ENCODE measurements at regions of chr5 and their contacts with region 1.

Region 1: GRCh38 chr5:112154940-112155686 is 264.0 kb downstream of the EPB41L4A start:
- DNase-seq: no peak
- ATAC-seq: peak; percentile 84
- H3K4me3 Mint-ChIP-seq: no peak overlapping the region
- H3K27ac Mint-ChIP-seq: peak overlapping the region; percentile 40
- H3K4me1 Mint-ChIP-seq: peaks cover 26% of the 10 kb centered on the region
- H3K27me3 Mint-ChIP-seq: no peaks in the 10 kb centered on the region

Region 2: DNA sequence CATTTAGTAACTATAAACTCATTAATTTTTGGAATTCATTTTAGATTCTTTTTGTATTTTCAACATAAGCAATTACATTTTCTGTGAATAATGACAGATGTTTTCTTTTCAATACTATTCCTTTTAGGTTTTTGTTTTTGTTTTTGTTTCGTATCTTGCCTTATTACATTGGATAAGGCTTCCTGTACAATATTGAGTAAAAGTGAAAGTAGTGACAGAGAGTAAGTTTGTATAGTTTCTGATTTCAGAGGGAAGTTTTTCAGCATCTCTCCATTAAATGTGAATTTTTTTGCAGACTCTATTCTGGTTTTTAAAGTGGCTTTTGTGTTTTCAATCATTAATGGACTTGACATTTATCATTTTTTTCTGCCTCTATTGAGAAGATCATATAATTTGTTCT is 943.8 kb before region 1 on chr5:
- CTCF ChIA-PET with region 1: no interaction called
- POLR2A ChIA-PET with region 1: no interaction called
- intact Hi-C with region 1: loop called in 1 of 2 experiments (anchors 10 kb)
- DNase-seq: no peak
- ATAC-seq: peak; percentile 81
- H3K4me3 Mint-ChIP-seq: no peak overlapping the region
- H3K27ac Mint-ChIP-seq: peak overlapping the region; percentile 14
- H3K4me1 Mint-ChIP-seq: peaks cover 36% of the 10 kb centered on the region
- H3K27me3 Mint-ChIP-seq: peaks cover 3% of the 10 kb centered on the region

Region 3: GRCh38 chr5:111229871-111230810 is 925.0 kb before region 1 on chr5:
- CTCF ChIA-PET with region 1: no interaction called
- POLR2A ChIA-PET with region 1: no interaction called
- intact Hi-C with region 1: loop called (anchors 10 kb)
- DNase-seq: peak; percentile 36
- ATAC-seq: peak; percentile 49
- H3K4me3 Mint-ChIP-seq: peak overlapping the region; percentile 69
- H3K27ac Mint-ChIP-seq: peak overlapping the region; percentile 96
- H3K4me1 Mint-ChIP-seq: peaks cover 71% of the 10 kb centered on the region
- H3K27me3 Mint-ChIP-seq: no peaks in the 10 kb centered on the region

Region 4: GRCh38 chr5:111757355-111758283 is 397.5 kb before region 1 on chr5:
- CTCF ChIA-PET with region 1: interaction called, 5 read pairs
- POLR2A ChIA-PET with region 1: no interaction called
- intact Hi-C with region 1: loop called (anchors 2 to 5 kb)
- DNase-seq: peak; percentile 91
- ATAC-seq: peak; percentile 78
- H3K4me3 Mint-ChIP-seq: peak overlapping the region; percentile 80
- H3K27ac Mint-ChIP-seq: peak overlapping the region; percentile 86
- H3K4me1 Mint-ChIP-seq: peaks cover 18% of the 10 kb centered on the region
- H3K27me3 Mint-ChIP-seq: peaks cover 3% of the 10 kb centered on the region

Region 5: GRCh38 chr5:112958093-112959088 is 803.3 kb after region 1 on chr5:
- CTCF ChIA-PET with region 1: no interaction called
- POLR2A ChIA-PET with region 1: no interaction called
- intact Hi-C with region 1: loop called in 1 of 2 experiments (anchors 2 kb)
- DNase-seq: peak; percentile 60
- ATAC-seq: peak; percentile 91
- H3K4me3 Mint-ChIP-seq: no peak overlapping the region
- H3K27ac Mint-ChIP-seq: no peak overlapping the region
- H3K4me1 Mint-ChIP-seq: peaks cover 36% of the 10 kb centered on the region
- H3K27me3 Mint-ChIP-seq: no peaks in the 10 kb centered on the region

Region 6: GRCh38 chr5:113474100-113474728 is 1319.1 kb after region 1 on chr5:
- CTCF ChIA-PET with region 1: no interaction called
- POLR2A ChIA-PET with region 1: no interaction called
- intact Hi-C with region 1: no loop called
- DNase-seq: no peak
- ATAC-seq: no peak
- H3K4me3 Mint-ChIP-seq: no peak overlapping the region
- H3K27ac Mint-ChIP-seq: no peak overlapping the region
- H3K4me1 Mint-ChIP-seq: no peaks in the 10 kb centered on the region
- H3K27me3 Mint-ChIP-seq: peaks cover 30% of the 10 kb centered on the region